Naive thymus-derived CD4-positive, alpha-beta T cell (primary cell): ENCODE measurements at regions of chr1 and their contacts with region 1.

Region 1: GRCh38 chr1:90721210-90722194 is 4.4 kb upstream of the BARHL2 start:
- DNase-seq: peak in 1 of 9 donors; percentile 54
- ATAC-seq: peak; percentile 58
- H3K4me3 ChIP-seq: no peak overlapping the region
- H3K4me3 Mint-ChIP-seq: peak overlapping the region in 8 of 10 donors; percentile 1 to 53 (median 28)
- H3K27ac ChIP-seq: no peak overlapping the region
- H3K27ac Mint-ChIP-seq: peak overlapping the region in 4 of 9 donors; percentile 13 to 65 (median 40)
- H3K4me1 ChIP-seq: peaks cover 5 to 30% of the 10 kb centered on the region in 2 donors
- H3K4me1 Mint-ChIP-seq: peaks cover 23 to 76% (median 61%) of the 10 kb centered on the region in 7 donors
- H3K27me3 ChIP-seq: peaks cover 31 to 85% of the 10 kb centered on the region in 2 donors
- H3K27me3 Mint-ChIP-seq: peaks cover 84 to 91% (median 85%) of the 10 kb centered on the region in 5 donors

Region 2: DNA sequence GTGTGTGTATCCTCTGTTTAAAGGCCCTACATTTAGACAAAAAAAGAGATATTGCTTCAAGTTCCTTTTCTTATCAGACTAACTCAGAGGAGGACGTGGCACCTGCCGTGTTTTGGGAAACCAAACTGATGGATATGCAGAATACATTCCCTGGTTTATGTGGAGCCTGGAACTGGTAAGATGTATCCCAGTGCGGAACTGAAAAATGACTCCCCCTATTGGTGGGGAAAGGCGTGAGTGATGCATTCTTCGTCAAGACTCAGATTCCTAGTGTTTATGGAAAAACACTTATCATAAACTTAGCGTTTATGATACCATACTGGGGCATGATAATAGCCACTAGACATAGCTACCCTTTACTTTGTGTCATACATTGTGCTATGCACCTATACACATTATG is 572.4 kb before region 1 on chr1:
- CTCF ChIA-PET with region 1: no interaction called
- POLR2A ChIA-PET with region 1: no interaction called
- intact Hi-C with region 1: no loop called
- DNase-seq: no peak
- ATAC-seq: no peak
- H3K4me3 ChIP-seq: no peak overlapping the region
- H3K4me3 Mint-ChIP-seq: no peak overlapping the region
- H3K27ac ChIP-seq: no peak overlapping the region
- H3K27ac Mint-ChIP-seq: no peak overlapping the region
- H3K4me1 ChIP-seq: no peaks in the 10 kb centered on the region
- H3K4me1 Mint-ChIP-seq: no peaks in the 10 kb centered on the region
- H3K27me3 ChIP-seq: no peaks in the 10 kb centered on the region
- H3K27me3 Mint-ChIP-seq: peaks cover 0 to 38% (median 16%) of the 10 kb centered on the region in 5 donors

Region 3: GRCh38 chr1:90834886-90835660 is 113.6 kb after region 1 on chr1:
- CTCF ChIA-PET with region 1: interaction called, 3 read pairs
- POLR2A ChIA-PET with region 1: no interaction called
- intact Hi-C with region 1: loop called (anchors 2 to 5 kb)
- DNase-seq: no peak
- ATAC-seq: no peak
- H3K4me3 ChIP-seq: no peak overlapping the region
- H3K4me3 Mint-ChIP-seq: peak overlapping the region in 9 of 10 donors; percentile 32 to 67 (median 60)
- H3K27ac ChIP-seq: no peak overlapping the region
- H3K27ac Mint-ChIP-seq: no peak overlapping the region
- H3K4me1 ChIP-seq: peaks cover 0 to 14% of the 10 kb centered on the region in 2 donors
- H3K4me1 Mint-ChIP-seq: peaks cover 3 to 40% (median 19%) of the 10 kb centered on the region in 7 donors
- H3K27me3 ChIP-seq: peaks cover 18 to 41% of the 10 kb centered on the region in 2 donors
- H3K27me3 Mint-ChIP-seq: peaks cover 86 to 96% (median 87%) of the 10 kb centered on the region in 5 donors

Region 4: DNA sequence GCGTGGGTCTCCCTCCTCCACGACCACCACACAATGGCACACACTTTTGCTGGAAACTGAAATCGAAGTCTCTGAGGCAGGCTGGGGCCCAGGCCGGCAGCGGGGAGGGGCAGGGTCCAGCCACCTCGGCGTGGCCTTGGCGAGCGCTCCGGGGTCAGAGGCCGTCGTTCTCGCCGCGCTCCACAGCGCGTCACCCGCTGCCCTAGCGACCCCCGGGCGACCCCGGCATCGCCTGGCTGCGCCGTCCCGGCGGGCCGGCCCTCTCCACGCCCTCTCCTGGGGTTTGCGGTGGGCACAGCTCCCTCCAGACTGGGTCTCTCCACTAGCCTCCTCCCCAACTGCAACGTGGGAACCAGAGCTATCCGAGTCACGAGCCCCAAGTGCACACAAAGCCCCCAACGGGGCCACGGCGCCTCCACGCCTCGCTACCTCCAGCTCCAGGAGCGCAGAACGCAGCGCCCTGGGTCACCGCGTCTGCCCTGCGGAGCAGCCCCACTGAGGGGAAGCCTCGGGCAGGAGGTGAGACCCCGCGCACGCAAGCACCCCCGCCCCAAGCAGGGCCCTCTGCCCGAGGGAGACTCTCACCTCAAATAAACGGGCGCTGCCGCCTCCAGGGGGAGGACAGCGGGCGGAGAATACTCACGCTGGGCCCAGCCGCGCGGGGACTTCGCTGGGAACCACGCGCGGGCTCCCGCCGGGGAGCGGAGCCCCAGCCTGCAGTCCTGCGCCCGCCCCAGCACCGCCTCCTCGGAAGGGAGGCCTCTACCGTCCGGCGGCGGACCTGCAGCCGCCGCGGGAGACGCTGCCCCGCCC is 129.6 kb after region 1 on chr1:
- CTCF ChIA-PET with region 1: no interaction called
- POLR2A ChIA-PET with region 1: no interaction called
- intact Hi-C with region 1: loop called in 1 of 2 experiments (anchors 5 kb)
- DNase-seq: peak; percentile 38 to 78 (median 55)
- ATAC-seq: peak; percentile 97
- H3K4me3 ChIP-seq: peak overlapping the region; percentile 69
- H3K4me3 Mint-ChIP-seq: peak overlapping the region; percentile 78 to 87 (median 84)
- H3K27ac ChIP-seq: no peak overlapping the region
- H3K27ac Mint-ChIP-seq: no peak overlapping the region
- H3K4me1 ChIP-seq: peaks cover 4% of the 10 kb centered on the region in 2 donors
- H3K4me1 Mint-ChIP-seq: peaks cover 7 to 13% (median 10%) of the 10 kb centered on the region in 7 donors
- H3K27me3 ChIP-seq: peaks cover 0 to 9% of the 10 kb centered on the region in 2 donors
- H3K27me3 Mint-ChIP-seq: peaks cover 58 to 74% (median 68%) of the 10 kb centered on the region in 5 donors